Caco-2 (cell line): ENCODE measurements at regions of chr1 and their contacts with region 1.

Region 1: DNA sequence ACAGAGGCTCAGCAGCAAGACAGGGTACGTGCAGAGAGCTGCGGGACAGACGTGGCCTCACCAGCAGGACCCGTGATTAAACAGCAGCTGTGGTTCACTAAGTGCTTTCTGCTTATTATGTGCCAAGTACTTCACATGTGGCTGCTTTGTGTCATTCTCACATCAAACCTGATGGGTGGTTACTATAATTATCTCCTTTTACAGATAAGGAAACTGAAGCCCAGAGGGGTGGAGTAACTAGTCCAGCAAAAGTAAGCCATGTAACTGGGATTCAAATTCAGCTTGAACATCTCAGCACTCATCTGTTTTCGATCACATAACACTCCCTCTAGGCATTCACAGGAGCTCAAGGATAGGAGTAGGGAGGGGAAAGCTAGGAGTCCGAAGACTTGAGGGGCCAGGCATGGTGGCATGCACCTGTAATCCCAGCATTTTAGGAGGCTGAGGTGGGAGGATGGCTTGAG is 50.8 kb upstream of the CLIC4 start:
- DNase-seq: no peak
- H3K4me3 ChIP-seq: no peak overlapping the region
- H3K4me3 Mint-ChIP-seq: no peak overlapping the region
- H3K27ac Mint-ChIP-seq: no peak overlapping the region
- H3K4me1 ChIP-seq: no peaks in the 10 kb centered on the region
- H3K4me1 Mint-ChIP-seq: no peaks in the 10 kb centered on the region
- H3K27me3 ChIP-seq: no peaks in the 10 kb centered on the region
- H3K27me3 Mint-ChIP-seq: no peaks in the 10 kb centered on the region
- CTCF ChIP-seq: no peak

Region 2: DNA sequence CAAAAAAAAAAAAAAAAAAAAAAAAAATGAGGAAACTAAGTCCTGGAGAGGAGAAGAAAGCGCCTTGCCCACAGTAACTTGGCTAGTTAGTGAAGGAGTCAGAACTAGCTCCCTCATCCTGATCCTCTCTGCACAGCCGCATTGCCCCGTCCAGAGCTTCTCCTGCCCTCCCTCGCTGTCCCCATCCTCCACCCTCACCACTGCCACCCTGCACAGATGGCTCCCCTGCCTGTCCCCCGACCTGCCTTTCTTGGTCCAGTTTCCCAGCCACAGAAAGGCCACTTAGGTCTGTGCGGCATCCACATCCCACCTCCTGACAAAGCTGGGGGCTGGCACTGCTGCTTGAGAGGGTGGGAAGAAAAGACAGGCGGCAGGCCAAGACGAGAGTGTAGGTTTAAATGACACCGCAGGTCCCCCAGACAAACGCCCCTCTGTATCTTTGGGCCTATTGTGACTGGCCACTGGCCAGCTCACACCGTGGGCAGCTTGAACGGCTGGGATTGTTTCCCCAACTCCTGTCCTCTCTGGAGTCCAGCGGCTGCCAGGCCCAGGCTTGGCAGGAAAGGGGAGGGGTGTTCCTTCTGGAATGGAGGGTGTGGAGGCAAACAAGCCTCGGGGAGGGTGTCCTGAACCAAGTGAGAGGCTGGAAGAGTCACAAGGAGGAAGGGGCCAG is 118.4 kb before region 1 on chr1:
- CTCF ChIA-PET with region 1: no interaction called
- POLR2A ChIA-PET with region 1: interaction called, 14 read pairs
- intact Hi-C with region 1: no loop called
- DNase-seq: no peak
- H3K4me3 ChIP-seq: no peak overlapping the region
- H3K4me3 Mint-ChIP-seq: no peak overlapping the region
- H3K27ac Mint-ChIP-seq: no peak overlapping the region
- H3K4me1 ChIP-seq: no peaks in the 10 kb centered on the region
- H3K4me1 Mint-ChIP-seq: no peaks in the 10 kb centered on the region
- H3K27me3 ChIP-seq: no peaks in the 10 kb centered on the region
- H3K27me3 Mint-ChIP-seq: no peaks in the 10 kb centered on the region
- CTCF ChIP-seq: no peak